Activated CD8-positive, alpha-beta T cell treated with anti-CD3 and anti-CD28 coated beads for 36 hours (primary cell): ENCODE measurements at regions of chr3 and their contacts with region 1.

Region 1: GRCh38 chr3:101069901-101070798 is 76.9 kb upstream of the ABI3BP start:
- DNase-seq: peak; percentile 80
- ATAC-seq: peak; percentile 83
- H3K4me3 Mint-ChIP-seq: no peak overlapping the region
- H3K27ac Mint-ChIP-seq: no peak overlapping the region
- H3K4me1 Mint-ChIP-seq: no peaks in the 10 kb centered on the region
- H3K27me3 Mint-ChIP-seq: peaks cover 21% of the 10 kb centered on the region
- CTCF ChIP-seq: peak; percentile 89

Region 2: DNA sequence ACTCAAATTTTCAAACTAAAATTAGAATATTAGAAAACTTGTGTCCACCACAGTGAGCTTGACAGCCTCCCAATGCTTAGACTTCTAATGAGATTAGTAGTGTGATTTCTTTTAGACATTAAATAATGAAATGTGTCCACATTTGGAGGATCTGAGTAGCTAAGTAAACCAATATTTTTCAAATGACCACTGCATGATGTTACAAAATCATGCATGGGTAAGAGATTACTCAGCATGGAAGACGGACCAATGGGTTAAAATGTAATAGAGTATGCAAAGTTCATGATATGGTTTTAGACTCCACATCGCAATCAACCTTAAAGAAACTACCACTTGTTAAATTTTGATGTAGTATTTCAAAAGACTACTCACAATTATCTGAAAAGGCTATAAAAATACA is 119.6 kb after region 1 on chr3:
- CTCF ChIA-PET with region 1: interaction called, 11 read pairs
- POLR2A ChIA-PET with region 1: no interaction called
- intact Hi-C with region 1: no loop called
- DNase-seq: no peak
- ATAC-seq: no peak
- H3K4me3 Mint-ChIP-seq: no peak overlapping the region
- H3K27ac Mint-ChIP-seq: no peak overlapping the region
- H3K4me1 Mint-ChIP-seq: no peaks in the 10 kb centered on the region
- H3K27me3 Mint-ChIP-seq: peaks cover 9% of the 10 kb centered on the region
- CTCF ChIP-seq: no peak

Region 3: GRCh38 chr3:101195951-101196713 is 126.0 kb after region 1 on chr3:
- CTCF ChIA-PET with region 1: interaction called, 13 read pairs
- POLR2A ChIA-PET with region 1: no interaction called
- intact Hi-C with region 1: loop called (anchors 2 kb)
- DNase-seq: no peak
- ATAC-seq: no peak
- H3K4me3 Mint-ChIP-seq: no peak overlapping the region
- H3K27ac Mint-ChIP-seq: no peak overlapping the region
- H3K4me1 Mint-ChIP-seq: no peaks in the 10 kb centered on the region
- H3K27me3 Mint-ChIP-seq: peaks cover 8% of the 10 kb centered on the region
- CTCF ChIP-seq: peak; percentile 40

Region 4: DNA sequence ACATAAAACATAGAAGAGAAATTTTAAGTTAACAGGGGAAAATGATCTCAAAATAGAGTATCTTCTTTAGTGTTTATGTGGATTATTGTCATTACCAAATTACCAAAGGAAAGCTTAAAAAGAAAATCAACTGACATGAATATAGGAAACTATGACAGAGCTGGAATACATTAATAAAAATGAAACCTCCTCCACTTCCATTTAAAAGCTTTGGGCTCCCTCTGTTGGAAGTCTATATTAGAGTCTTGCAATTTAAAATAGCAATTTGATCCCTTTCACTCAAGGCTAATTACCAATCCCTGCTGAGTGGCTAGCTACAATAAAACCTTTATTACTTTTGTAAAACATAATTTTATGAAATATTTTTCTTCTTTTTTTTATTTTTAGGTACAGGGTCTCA is 311.7 kb after region 1 on chr3:
- CTCF ChIA-PET with region 1: interaction called, 31 read pairs
- POLR2A ChIA-PET with region 1: no interaction called
- intact Hi-C with region 1: loop called (anchors 2 kb)
- DNase-seq: no peak
- ATAC-seq: peak; percentile 47
- H3K4me3 Mint-ChIP-seq: no peak overlapping the region
- H3K27ac Mint-ChIP-seq: no peak overlapping the region
- H3K4me1 Mint-ChIP-seq: peaks cover 48% of the 10 kb centered on the region
- H3K27me3 Mint-ChIP-seq: no peaks in the 10 kb centered on the region
- CTCF ChIP-seq: peak; percentile 69